Esophagus muscularis mucosa (tissue), 4 donors: ENCODE measurements at regions of chr12 and their contacts with region 1.

Region 1: GRCh38 chr12:63668028-63668799 is at the start of gene DPY19L2:
- DNase-seq: peak; percentile 92
- H3K4me3 ChIP-seq: peak within 1 kb of the TSS; percentile 70 to 75 (median 74)
- H3K27ac ChIP-seq: peak within 1 kb of the TSS; percentile 69 to 88 (median 84)
- H3K4me1 ChIP-seq: peaks cover 0 to 16% (median 2%) of the 10 kb centered on the region in 4 donors
- H3K27me3 ChIP-seq: no peaks in the 10 kb centered on the region
- CTCF ChIP-seq: no peak
- EP300 ChIP-seq: no peak
- POLR2A ChIP-seq: no peak
- total RNA-seq, gene DPY19L2: 5.0 to 12.2 (median 8.3) TPM

Region 2: GRCh38 chr12:63439774-63440447 is 228.3 kb before region 1 on chr12:
- intact Hi-C with region 1: no loop called
- DNase-seq: no peak
- H3K4me3 ChIP-seq: no peak overlapping the region
- H3K27ac ChIP-seq: no peak overlapping the region
- H3K4me1 ChIP-seq: no peaks in the 10 kb centered on the region
- H3K27me3 ChIP-seq: no peaks in the 10 kb centered on the region
- CTCF ChIP-seq: no peak
- EP300 ChIP-seq: no peak
- POLR2A ChIP-seq: no peak

Region 3: DNA sequence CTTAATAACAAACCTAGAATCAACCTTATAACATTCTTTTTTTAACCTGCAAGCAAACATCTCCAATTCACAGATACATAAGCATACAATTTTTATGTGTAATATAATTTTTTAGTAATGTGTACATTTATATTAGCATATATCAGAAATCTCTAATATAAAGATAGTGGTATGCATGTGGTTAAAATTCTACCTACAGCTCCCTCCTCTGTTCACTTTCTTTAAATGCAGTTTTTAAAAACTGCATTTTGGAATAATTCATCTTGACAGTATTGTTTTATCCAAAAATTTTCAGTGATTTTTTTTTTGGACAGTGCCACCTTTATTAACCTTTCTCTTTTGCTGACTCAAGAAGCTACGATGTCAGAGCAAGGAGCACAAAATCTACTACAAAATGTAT is 98.3 kb after region 1 on chr12:
- intact Hi-C with region 1: loop called (anchors 10 kb)
- DNase-seq: no peak
- H3K4me3 ChIP-seq: no peak overlapping the region
- H3K27ac ChIP-seq: no peak overlapping the region
- H3K4me1 ChIP-seq: no peaks in the 10 kb centered on the region
- H3K27me3 ChIP-seq: no peaks in the 10 kb centered on the region
- CTCF ChIP-seq: peak in 1 of 3 experiments; percentile 6
- EP300 ChIP-seq: no peak
- POLR2A ChIP-seq: no peak

Region 4: DNA sequence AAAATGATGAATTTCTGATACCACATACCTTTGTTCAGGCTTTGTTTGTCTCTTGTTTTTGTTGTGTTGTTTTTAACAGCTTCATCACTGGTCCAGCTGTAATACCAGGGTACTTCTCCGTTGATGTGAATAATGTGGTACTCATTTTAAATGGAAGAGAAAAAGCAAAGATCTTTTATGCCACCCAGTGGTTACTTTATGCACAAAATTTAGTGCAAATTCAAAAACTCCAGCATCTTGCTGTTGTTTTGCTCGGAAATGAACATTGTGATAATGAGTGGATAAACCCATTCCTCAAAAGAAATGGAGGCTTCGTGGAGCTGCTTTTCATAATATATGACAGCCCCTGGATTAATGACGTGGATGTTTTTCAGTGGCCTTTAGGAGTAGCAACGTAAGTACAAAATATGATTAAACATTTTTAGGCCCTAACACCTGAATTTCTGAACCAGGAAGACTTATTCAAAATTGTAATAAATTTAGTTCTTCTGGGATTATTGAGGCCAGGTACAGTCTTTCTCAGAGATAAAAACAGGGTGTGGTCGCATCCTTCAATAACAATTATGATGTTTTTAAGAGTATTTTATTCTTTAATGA is 133.9 kb after region 1 on chr12:
- intact Hi-C with region 1: loop called (anchors 10 kb)
- DNase-seq: no peak
- H3K4me3 ChIP-seq: no peak overlapping the region
- H3K27ac ChIP-seq: no peak overlapping the region
- H3K4me1 ChIP-seq: no peaks in the 10 kb centered on the region
- H3K27me3 ChIP-seq: no peaks in the 10 kb centered on the region
- CTCF ChIP-seq: peak; percentile 38 to 57 (median 51)
- EP300 ChIP-seq: no peak
- POLR2A ChIP-seq: no peak